ENCODE measurements at regions of chr1 and their contacts with region 1.

Region 1: DNA sequence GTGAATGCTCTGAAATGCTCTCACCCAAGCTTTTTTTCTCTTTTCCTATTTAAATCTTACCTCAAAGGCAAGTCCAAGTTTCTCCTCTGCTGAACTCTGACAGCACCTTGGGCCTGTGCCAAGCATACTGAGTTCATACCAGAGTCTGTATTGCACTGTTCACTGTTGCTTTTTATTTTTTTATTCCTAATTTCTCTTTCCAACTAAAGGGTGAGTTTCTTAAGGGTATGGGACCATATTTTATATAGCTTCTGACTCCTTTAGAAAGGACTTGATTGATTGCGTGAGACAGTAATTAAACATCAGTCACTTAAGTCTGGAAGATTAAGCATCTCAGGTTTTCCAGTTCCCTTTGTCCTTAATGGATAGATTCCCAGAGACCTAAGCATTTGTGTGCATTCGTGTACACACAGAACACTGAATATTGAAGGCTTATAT is 69.9 kb downstream of the CACHD1 start:
- DNase-seq: peak in 1 of 2 donors; percentile 50
- H3K4me3 ChIP-seq: peak overlapping the region; percentile 11 to 47 (median 17)
- H3K27ac ChIP-seq: peak overlapping the region; percentile 67 to 68
- H3K4me1 ChIP-seq: peaks cover 0 to 14% of the 10 kb centered on the region in 2 donors
- H3K27me3 ChIP-seq: no peaks in the 10 kb centered on the region
- CTCF ChIP-seq: no peak
- POLR2A ChIP-seq: no peak

Region 2: DNA sequence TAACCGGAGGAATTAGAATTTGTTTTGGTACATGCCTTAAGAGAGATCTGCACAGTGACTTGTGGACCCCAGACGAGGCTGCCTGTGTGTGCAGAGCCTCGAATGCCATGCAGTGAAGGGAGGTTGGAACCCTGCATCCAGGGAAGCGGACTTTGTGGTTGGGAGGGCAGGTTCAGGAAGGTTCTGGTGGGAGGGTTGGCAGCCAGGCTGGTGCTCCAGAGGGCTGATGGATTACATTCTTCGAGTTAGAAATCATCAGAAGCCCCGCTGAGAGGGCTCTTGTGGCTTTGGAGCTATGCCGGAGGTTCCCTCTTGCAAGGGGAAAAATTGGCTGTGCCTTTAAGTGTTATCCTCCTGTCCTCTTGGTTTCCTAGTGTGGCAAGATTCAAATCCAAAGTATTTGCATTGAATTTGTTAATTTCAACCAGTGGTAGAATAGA is 744.8 kb before region 1 on chr1:
- intact Hi-C with region 1: loop called (anchors 5 kb)
- DNase-seq: no peak
- H3K4me3 ChIP-seq: no peak overlapping the region
- H3K27ac ChIP-seq: no peak overlapping the region
- H3K4me1 ChIP-seq: no peaks in the 10 kb centered on the region
- H3K27me3 ChIP-seq: no peaks in the 10 kb centered on the region
- CTCF ChIP-seq: no peak
- POLR2A ChIP-seq: no peak

Region 3: GRCh38 chr1:64453688-64454087 is 86.1 kb before region 1 on chr1:
- intact Hi-C with region 1: no loop called
- DNase-seq: no peak
- H3K4me3 ChIP-seq: no peak overlapping the region
- H3K27ac ChIP-seq: no peak overlapping the region
- H3K4me1 ChIP-seq: no peaks in the 10 kb centered on the region
- H3K27me3 ChIP-seq: no peaks in the 10 kb centered on the region
- CTCF ChIP-seq: no peak
- POLR2A ChIP-seq: no peak

Measured in breast epithelium (tissue), 4 donors.